ENCODE measurements at regions of chr16 and their contacts with region 1.

Region 1: GRCh38 chr16:31094424-31095120 is at the start of gene VKORC1:
- DNase-seq: peak; percentile 97
- H3K4me3 Mint-ChIP-seq: peak within 1 kb of the TSS; percentile 89
- H3K27ac Mint-ChIP-seq: peak within 1 kb of the TSS; percentile 82
- H3K4me1 Mint-ChIP-seq: peaks cover 12% of the 10 kb centered on the region
- H3K27me3 Mint-ChIP-seq: no peaks in the 10 kb centered on the region
- CTCF ChIP-seq: no peak
- total RNA-seq, gene VKORC1: 80.1 and 86.8 TPM in 2 replicates

Region 2: DNA sequence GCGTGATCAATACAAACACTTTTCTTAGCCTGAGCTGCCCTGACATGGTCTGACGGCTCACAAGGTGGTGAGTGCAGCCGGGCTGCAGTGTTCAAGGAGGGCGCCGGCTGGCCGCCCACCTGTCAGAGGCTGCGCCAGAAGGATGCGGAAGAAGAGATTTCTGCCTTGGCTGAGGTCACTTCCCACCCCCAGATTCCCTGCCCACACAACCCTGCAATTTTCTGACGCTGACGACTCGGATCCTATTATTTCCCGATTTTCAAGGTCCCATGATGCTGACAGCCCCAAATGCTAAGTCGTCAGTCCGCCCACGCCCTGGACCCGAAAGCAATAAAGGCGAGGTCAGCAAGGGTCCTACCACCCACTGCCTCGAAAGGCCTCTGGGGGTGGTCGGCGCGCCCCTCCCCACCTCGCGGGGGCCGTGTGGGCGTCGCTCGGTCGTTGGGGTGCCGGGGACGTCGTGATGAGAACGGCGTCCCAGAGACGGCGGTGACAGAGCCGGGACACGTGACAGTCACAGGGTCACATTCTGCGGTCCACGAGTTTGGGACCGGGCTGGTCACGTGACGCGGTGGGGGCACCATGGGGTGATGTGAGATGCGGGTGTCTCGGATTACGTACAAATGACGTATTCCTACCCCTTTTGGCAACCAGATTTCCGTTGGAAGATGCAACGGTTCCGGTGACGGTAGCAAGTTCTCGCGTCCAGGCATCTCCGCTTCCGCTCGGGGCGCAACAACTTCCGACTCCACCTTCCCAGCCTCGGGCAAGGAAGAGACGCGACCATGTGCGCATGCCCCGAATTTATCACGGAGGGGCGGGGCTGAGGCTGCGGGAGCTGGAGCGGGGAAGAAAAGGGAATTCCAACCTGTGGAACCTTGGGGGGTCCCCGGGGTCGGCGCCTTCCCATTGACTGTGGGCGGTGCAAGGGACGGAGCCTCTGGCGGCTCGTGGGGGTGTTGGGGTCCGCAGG is 61.5 kb before region 1 on chr16 and contains the start of gene STX4:
- CTCF ChIA-PET with region 1: interaction called, 11 read pairs
- intact Hi-C with region 1: no loop called
- DNase-seq: peak; percentile 97
- H3K4me3 Mint-ChIP-seq: peak within 1 kb of the TSS; percentile 99
- H3K27ac Mint-ChIP-seq: peak within 1 kb of the TSS; percentile 89
- H3K4me1 Mint-ChIP-seq: no peaks in the 10 kb centered on the region
- H3K27me3 Mint-ChIP-seq: no peaks in the 10 kb centered on the region
- CTCF ChIP-seq: no peak
- total RNA-seq, gene STX4: 100 and 104 TPM in 2 replicates

Region 3: DNA sequence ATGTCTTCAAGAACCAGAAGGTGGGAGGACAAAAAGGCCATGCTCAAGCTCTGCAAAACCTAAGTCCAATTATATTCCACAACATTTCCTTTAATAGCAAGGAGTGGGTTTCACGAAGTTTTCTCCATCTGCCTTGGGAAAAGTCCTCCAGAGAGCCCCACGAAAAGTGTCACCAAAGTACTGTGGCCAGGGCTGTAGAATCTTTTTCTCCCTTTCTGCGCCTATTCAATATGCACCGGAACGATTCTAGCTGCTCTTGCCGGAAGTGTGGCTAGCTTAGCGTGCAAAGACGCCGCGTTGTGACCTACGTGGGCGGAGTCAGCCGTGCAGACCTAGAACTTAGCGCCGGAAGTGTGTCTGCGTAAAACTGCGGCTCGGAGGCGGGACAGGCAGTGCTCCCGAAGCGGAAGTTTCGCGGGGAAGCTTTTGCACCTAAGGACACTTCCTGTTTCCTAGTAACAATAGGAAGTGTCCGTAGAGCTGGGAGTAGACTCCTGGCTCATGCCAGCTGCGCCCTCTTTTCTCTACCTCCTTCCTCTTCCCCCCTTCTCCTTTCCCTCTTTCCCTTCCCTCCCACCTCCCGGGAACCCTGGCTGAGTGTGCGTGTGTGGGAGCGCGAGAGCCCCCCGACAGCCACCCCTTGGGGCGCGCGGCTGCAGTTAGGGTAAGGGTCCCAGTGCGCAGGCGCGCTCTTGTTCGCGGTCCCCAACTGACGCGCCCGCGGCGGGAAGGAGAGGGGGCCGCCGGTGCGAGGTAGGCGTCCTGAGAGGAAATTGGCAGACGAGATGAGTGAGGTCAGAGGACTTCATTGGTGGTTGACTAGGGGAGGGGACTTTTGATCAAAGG is 20.4 kb before region 1 on chr16 and contains the starts of genes ZNF646 and ZNF668:
- CTCF ChIA-PET with region 1: no interaction called
- intact Hi-C with region 1: loop called (anchors 2 kb)
- DNase-seq: peak; percentile 98
- H3K4me3 Mint-ChIP-seq: peak within 1 kb of the TSS; percentile 88
- H3K27ac Mint-ChIP-seq: peak within 1 kb of the TSS; percentile 89
- H3K4me1 Mint-ChIP-seq: peaks cover 26% of the 10 kb centered on the region
- H3K27me3 Mint-ChIP-seq: no peaks in the 10 kb centered on the region
- CTCF ChIP-seq: no peak
- total RNA-seq, gene ZNF646: 34.4 and 34.9 TPM in 2 replicates
- total RNA-seq, gene ZNF668: 12.5 and 13.0 TPM in 2 replicates

Measured in Calu3 (cell line).